CD8-positive, alpha-beta T cell (primary cell): ENCODE measurements at regions of chr1 and their contacts with region 1.

Region 1: GRCh38 chr1:229625915-229626831 is at the starts of genes TAF5L and URB2:
- DNase-seq: peak; percentile 60 to 94 (median 81)
- ATAC-seq: peak; percentile 90
- H3K4me3 ChIP-seq: peak within 1 kb of the TSS; percentile 92 to 95
- H3K4me3 Mint-ChIP-seq: peak within 1 kb of the TSS; percentile 99
- H3K27ac ChIP-seq: peak within 1 kb of the TSS; percentile 70 to 78
- H3K27ac Mint-ChIP-seq: peak within 1 kb of the TSS; percentile 95
- H3K4me1 ChIP-seq: peaks cover 29% of the 10 kb centered on the region
- H3K4me1 Mint-ChIP-seq: peaks cover 54% of the 10 kb centered on the region
- H3K27me3 ChIP-seq: no peaks in the 10 kb centered on the region
- H3K27me3 Mint-ChIP-seq: no peaks in the 10 kb centered on the region
- CTCF ChIP-seq: no peak
- total RNA-seq, gene TAF5L: 25.4 to 28.0 TPM
- total RNA-seq, gene URB2: 8.5 to 8.6 TPM

Region 2: GRCh38 chr1:229270547-229271447 is 355.4 kb before region 1 on chr1 and contains the start of gene RAB4A:
- CTCF ChIA-PET with region 1: no interaction called
- POLR2A ChIA-PET with region 1: no interaction called
- intact Hi-C with region 1: loop called in 1 of 2 experiments (anchors 5 kb)
- DNase-seq: peak; percentile 44 to 90 (median 71)
- ATAC-seq: peak; percentile 86
- H3K4me3 ChIP-seq: peak within 1 kb of the TSS; percentile 70 to 84
- H3K4me3 Mint-ChIP-seq: peak within 1 kb of the TSS; percentile 98
- H3K27ac ChIP-seq: peak within 1 kb of the TSS; percentile 45 to 57
- H3K27ac Mint-ChIP-seq: peak within 1 kb of the TSS; percentile 83
- H3K4me1 ChIP-seq: peaks cover 31% of the 10 kb centered on the region
- H3K4me1 Mint-ChIP-seq: peaks cover 37% of the 10 kb centered on the region
- H3K27me3 ChIP-seq: no peaks in the 10 kb centered on the region
- H3K27me3 Mint-ChIP-seq: no peaks in the 10 kb centered on the region
- CTCF ChIP-seq: no peak
- total RNA-seq, gene RAB4A: 26.7 to 29.7 TPM

Region 3: DNA sequence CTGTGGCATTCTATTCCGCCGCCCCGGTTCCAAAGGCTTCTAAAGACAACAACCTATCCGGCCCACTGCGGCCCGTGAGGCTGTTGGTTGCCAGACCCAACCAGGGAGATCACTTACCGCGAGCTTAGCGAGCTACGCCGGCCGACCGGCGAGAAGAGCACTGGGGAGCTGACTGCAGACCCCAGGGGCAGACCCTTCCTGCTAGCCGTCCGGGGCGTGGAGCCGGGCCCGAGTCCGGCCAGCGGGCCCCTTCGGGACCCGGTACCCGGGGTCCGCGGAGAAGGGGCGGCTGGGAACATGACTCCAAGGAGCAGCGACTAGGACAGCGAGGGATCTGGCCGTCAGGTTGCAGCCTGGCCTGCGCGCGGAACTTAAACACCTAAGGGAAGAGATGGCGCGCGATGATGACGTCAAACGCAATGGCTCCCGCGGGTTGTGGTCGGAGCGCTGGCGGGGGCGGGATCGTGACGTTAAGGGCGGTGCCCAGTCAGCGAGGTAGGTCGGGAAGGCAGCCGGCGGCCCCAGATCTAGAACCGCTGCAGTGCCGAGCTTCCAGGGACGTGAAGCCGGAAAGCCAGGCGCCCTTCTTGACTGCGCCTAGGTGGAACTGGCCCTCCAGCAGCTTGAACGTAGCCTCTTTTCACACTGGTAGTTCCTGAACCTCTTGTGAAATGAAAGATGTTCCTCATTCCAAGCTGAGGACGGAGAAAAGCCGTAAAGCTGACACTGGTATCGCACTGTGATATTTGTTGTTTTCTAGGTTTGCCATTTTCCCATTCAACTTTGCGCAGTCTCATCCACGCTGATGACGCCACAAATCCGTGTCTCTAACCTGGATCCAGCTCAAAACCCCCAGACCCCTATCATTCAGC is 118.0 kb before region 1 on chr1 and contains the start of gene NUP133:
- CTCF ChIA-PET with region 1: no interaction called
- POLR2A ChIA-PET with region 1: interaction called, 3 read pairs
- intact Hi-C with region 1: loop called (anchors 1 to 2 kb)
- DNase-seq: peak; percentile 96 to 100 (median 99)
- ATAC-seq: peak; percentile 94
- H3K4me3 ChIP-seq: peak within 1 kb of the TSS; percentile 94 to 99
- H3K4me3 Mint-ChIP-seq: peak within 1 kb of the TSS; percentile 87
- H3K27ac ChIP-seq: peak within 1 kb of the TSS; percentile 93 to 97
- H3K27ac Mint-ChIP-seq: peak within 1 kb of the TSS; percentile 99
- H3K4me1 ChIP-seq: peaks cover 20% of the 10 kb centered on the region
- H3K4me1 Mint-ChIP-seq: peaks cover 29% of the 10 kb centered on the region
- H3K27me3 ChIP-seq: no peaks in the 10 kb centered on the region
- H3K27me3 Mint-ChIP-seq: no peaks in the 10 kb centered on the region
- CTCF ChIP-seq: no peak
- total RNA-seq, gene NUP133: 49.0 to 50.7 TPM

Region 4: DNA sequence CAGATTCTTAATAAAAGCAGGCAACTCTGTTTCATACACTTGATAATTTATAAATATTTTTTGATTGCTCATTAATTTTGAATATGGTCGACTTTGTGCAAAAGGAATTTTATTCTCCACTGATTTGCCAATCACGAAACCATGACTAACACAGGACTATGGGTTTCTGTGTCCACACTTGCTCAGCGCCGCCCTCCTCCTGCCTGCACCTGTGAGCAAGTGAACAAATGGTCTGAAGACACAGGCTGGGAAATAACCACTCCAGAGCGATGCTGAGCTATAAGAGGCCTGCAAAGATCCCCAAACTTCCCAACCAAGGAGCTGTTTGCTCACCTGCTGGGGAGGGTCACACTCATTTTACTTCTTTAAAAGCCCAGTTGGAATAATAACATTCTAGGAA is 87.2 kb before region 1 on chr1:
- CTCF ChIA-PET with region 1: no interaction called
- POLR2A ChIA-PET with region 1: no interaction called
- intact Hi-C with region 1: no loop called
- DNase-seq: no peak
- ATAC-seq: no peak
- H3K4me3 ChIP-seq: no peak overlapping the region
- H3K4me3 Mint-ChIP-seq: no peak overlapping the region
- H3K27ac ChIP-seq: no peak overlapping the region
- H3K27ac Mint-ChIP-seq: no peak overlapping the region
- H3K4me1 ChIP-seq: no peaks in the 10 kb centered on the region
- H3K4me1 Mint-ChIP-seq: peaks cover 6% of the 10 kb centered on the region
- H3K27me3 ChIP-seq: no peaks in the 10 kb centered on the region
- H3K27me3 Mint-ChIP-seq: no peaks in the 10 kb centered on the region
- CTCF ChIP-seq: no peak

Region 5: GRCh38 chr1:229558571-229559335 is 67.4 kb before region 1 on chr1 and contains the start of gene ABCB10:
- CTCF ChIA-PET with region 1: interaction called, 10 read pairs
- POLR2A ChIA-PET with region 1: interaction called, 42 read pairs
- intact Hi-C with region 1: loop called (anchors 1 kb)
- DNase-seq: peak; percentile 56 to 93 (median 81)
- ATAC-seq: peak; percentile 81
- H3K4me3 ChIP-seq: peak within 1 kb of the TSS; percentile 74 to 82
- H3K4me3 Mint-ChIP-seq: peak within 1 kb of the TSS; percentile 95
- H3K27ac ChIP-seq: peak within 1 kb of the TSS; percentile 52 to 70
- H3K27ac Mint-ChIP-seq: peak within 1 kb of the TSS; percentile 90
- H3K4me1 ChIP-seq: peaks cover 18% of the 10 kb centered on the region
- H3K4me1 Mint-ChIP-seq: peaks cover 37% of the 10 kb centered on the region
- H3K27me3 ChIP-seq: no peaks in the 10 kb centered on the region
- H3K27me3 Mint-ChIP-seq: no peaks in the 10 kb centered on the region
- CTCF ChIP-seq: peak; percentile 30
- total RNA-seq, gene ABCB10: 6.1 to 7.6 TPM

Region 6: GRCh38 chr1:230867903-230868735 is 1241.9 kb after region 1 on chr1 and contains the start of gene C1orf198:
- CTCF ChIA-PET with region 1: no interaction called
- POLR2A ChIA-PET with region 1: no interaction called
- intact Hi-C with region 1: loop called in 1 of 2 experiments (anchors 10 kb)
- DNase-seq: peak; percentile 53 to 88 (median 72)
- ATAC-seq: peak; percentile 93
- H3K4me3 ChIP-seq: peak within 1 kb of the TSS; percentile 65 to 79
- H3K4me3 Mint-ChIP-seq: peak within 1 kb of the TSS; percentile 89
- H3K27ac ChIP-seq: peak within 1 kb of the TSS in 1 of 2 experiments; percentile 57
- H3K27ac Mint-ChIP-seq: peak within 1 kb of the TSS; percentile 49
- H3K4me1 ChIP-seq: peaks cover 14% of the 10 kb centered on the region
- H3K4me1 Mint-ChIP-seq: peaks cover 21% of the 10 kb centered on the region
- H3K27me3 ChIP-seq: no peaks in the 10 kb centered on the region
- H3K27me3 Mint-ChIP-seq: peaks cover 18% of the 10 kb centered on the region
- CTCF ChIP-seq: no peak
- total RNA-seq, gene C1orf198: 3.2 to 3.8 TPM